ENCODE measurements at regions of chr1 and their contacts with region 1.

Region 1: GRCh38 chr1:185853739-185854138 is 119.5 kb downstream of the HMCN1 start:
- DNase-seq: no peak
- ATAC-seq: no peak
- H3K4me3 ChIP-seq: no peak overlapping the region
- H3K27ac ChIP-seq: no peak overlapping the region
- H3K4me1 ChIP-seq: peaks cover 3 to 7% of the 10 kb centered on the region in 2 donors
- H3K27me3 ChIP-seq: no peaks in the 10 kb centered on the region

Region 2: GRCh38 chr1:185767508-185768120 is 86.1 kb before region 1 on chr1:
- intact Hi-C with region 1: no loop called
- DNase-seq: no peak
- ATAC-seq: no peak
- H3K4me3 ChIP-seq: no peak overlapping the region
- H3K27ac ChIP-seq: no peak overlapping the region
- H3K4me1 ChIP-seq: peaks cover 4 to 15% of the 10 kb centered on the region in 2 donors
- H3K27me3 ChIP-seq: no peaks in the 10 kb centered on the region

Region 3: GRCh38 chr1:185813401-185813979 is 40.2 kb before region 1 on chr1:
- intact Hi-C with region 1: loop called in 1 of 2 experiments (anchors 5 kb)
- DNase-seq: no peak
- ATAC-seq: no peak
- H3K4me3 ChIP-seq: no peak overlapping the region
- H3K27ac ChIP-seq: no peak overlapping the region
- H3K4me1 ChIP-seq: peaks cover 0 to 3% of the 10 kb centered on the region in 2 donors
- H3K27me3 ChIP-seq: no peaks in the 10 kb centered on the region

Region 4: DNA sequence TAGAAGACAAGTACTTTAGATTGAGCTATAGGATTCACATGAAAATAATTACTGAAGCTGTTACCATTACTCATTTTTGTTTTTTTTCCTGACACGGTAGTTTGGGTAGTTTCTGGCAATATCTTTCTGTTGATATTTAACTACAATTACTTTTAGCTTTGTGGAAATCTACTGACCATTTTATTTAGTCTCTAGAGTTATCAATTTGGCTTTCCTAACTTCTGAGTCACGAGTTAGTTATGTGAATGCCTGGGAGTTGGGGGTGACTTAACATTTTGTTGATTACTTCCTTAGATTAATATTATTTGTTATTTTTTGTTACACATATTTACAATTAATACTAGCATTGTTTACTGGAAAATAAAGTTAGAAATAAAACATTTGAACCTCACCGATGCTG is 41.1 kb after region 1 on chr1:
- intact Hi-C with region 1: no loop called
- DNase-seq: no peak
- ATAC-seq: no peak
- H3K4me3 ChIP-seq: no peak overlapping the region
- H3K27ac ChIP-seq: no peak overlapping the region
- H3K4me1 ChIP-seq: no peaks in the 10 kb centered on the region
- H3K27me3 ChIP-seq: no peaks in the 10 kb centered on the region